BJ (cell line): ENCODE measurements at regions of chr9 and their contacts with region 1.

Region 1: DNA sequence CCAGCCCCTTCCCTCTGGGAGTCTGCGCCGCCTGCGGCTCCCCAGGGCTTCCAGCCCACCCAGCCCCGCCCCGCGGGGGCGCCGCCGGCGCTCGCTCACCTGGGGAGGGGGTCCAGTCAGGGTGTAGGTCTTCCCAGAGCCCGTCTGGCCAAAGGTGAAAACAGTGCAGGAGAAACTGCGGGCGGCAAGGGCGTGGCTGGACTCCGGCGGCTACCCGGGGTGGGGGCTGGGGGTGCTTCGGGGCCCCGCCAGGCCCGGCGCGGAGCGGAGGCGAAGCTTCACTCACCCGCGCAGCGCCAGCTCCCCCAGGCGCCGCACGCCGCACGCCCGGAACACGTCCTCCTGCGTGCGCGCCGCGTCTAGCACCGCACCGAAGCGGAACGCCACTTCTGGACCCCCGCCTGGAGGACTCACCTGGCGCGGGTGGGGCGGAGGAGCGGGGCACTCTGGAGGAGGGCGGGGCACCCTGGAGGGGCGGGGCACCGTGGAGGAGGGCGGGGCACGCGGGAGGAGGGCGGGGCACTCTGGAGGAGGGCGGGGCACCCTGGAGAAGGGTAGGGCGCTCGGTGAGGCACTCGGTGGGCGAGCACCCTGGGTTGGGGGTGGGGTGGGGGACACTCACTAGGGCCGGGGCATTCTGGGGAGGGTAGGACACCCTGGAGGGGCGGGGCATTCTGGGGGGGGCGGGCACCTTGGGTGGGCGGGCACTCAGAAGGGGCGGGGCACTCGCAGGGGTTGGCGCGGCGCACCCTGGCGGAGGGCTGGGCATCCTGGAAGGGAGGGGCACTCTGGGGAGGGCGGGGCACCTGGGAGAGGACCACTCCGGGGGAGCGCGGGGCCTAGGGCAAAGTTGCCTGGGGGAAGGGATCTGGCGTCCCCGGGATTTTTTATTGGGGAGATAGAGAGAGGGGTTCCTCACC is 816 bp downstream of the KIF12 start:
- DNase-seq: no peak
- H3K4me3 ChIP-seq: peak overlapping the region; percentile 46
- H3K27me3 ChIP-seq: peaks cover 18% of the 10 kb centered on the region
- CTCF ChIP-seq: 0 out of 2 replicates have a peak, but pooled peaks have one; percentile 16

Region 2: GRCh38 chr9:113955076-113955752 is 143.1 kb before region 1 on chr9:
- CTCF ChIA-PET with region 1: no interaction called
- POLR2A ChIA-PET with region 1: no interaction called
- DNase-seq: peak; percentile 57
- H3K4me3 ChIP-seq: no peak overlapping the region
- H3K27me3 ChIP-seq: no peaks in the 10 kb centered on the region
- CTCF ChIP-seq: no peak

Region 3: DNA sequence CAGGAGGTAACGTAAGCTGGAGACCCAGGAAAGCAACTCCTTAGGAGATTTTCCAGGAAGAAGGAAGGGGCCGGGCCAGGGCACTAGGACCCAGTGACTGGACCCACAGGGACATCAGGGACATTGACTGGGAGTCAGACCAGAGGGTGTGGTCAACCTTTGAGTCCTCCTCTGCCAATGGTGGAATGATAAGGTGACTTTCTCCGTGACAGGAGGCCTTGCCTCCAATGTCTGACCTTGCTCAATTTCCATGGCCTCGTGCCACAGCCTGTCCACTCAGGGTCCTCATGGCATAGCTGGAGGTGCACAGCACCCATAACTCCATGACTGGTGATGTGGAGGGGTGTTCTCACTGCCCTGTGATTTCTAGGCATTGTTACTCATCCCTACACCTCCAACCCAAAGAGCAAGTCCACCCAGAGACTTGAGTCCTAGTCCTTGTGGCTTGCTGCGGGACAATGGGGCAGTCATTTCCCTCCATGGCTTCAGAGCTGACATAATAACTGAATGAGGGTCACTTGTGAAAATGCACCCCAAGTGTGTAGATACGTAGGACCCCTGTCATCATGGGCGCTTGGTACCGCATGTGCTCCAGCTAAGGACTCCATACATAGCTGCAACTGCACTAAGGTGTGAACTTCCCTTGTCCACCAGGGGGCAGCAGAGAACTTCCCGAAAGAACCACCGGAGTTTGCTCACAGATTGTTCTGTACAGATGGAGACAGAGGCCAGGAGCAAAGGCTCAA is 16.1 kb before region 1 on chr9:
- CTCF ChIA-PET with region 1: interaction called, 66 read pairs
- POLR2A ChIA-PET with region 1: no interaction called
- DNase-seq: peak; percentile 24
- H3K4me3 ChIP-seq: no peak overlapping the region
- H3K27me3 ChIP-seq: peaks cover 4% of the 10 kb centered on the region
- CTCF ChIP-seq: peak; percentile 90